ENCODE measurements at regions of chr4 and their contacts with region 1.

Region 1: DNA sequence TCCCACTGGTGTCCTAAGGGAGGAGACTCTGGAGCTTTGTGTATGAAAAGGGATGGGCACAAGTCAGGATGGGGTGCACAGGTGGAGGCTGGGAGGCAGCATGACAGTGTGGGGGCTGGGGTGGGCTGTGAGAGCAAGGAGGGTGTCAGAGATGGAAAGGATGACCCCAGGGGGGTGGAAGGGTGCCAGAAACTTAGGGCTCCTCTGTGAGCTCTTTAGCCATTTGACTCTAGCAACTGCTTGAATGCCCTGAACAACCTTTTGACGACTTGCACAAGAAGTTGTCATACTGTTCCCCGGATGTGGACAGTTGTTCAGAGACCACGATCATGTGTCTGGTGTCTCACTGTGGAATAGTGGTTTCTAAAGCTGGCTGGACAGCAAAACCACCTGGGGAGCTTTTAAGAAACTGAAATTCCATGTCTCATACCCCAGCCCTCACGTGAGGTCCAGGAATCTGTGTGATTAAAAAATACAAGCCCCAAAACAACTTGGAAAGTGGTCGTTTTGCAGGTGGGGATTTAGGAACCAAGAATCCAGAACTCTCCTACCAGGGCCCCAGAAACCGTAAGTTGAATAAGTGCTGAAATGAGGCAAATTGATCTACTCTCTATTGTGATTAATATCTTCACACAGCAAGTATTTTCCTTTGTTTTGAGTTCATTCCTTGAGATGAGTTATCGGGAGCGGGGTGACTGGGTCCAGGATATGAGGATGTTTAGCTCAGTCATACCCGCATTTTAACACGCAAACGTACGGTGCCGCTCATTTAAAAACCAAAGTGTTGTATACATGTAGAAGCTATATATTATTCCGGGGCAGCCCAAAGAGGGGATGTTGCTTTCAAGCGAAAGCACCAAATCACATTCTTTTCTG is 3.4 kb downstream of the RHOH start:
- DNase-seq: no peak
- ATAC-seq: peak; percentile 20
- H3K4me3 Mint-ChIP-seq: peak overlapping the region; percentile 97
- H3K27ac Mint-ChIP-seq: peak overlapping the region; percentile 95
- H3K4me1 Mint-ChIP-seq: peaks cover 67% of the 10 kb centered on the region
- H3K27me3 Mint-ChIP-seq: no peaks in the 10 kb centered on the region
- CTCF ChIP-seq: no peak

Region 2: GRCh38 chr4:38663801-38664705 is 1536.2 kb before region 1 on chr4 and contains the start of gene KLF3:
- CTCF ChIA-PET with region 1: no interaction called
- POLR2A ChIA-PET with region 1: no interaction called
- intact Hi-C with region 1: loop called (anchors 5 kb)
- DNase-seq: no peak
- ATAC-seq: peak; percentile 82
- H3K4me3 Mint-ChIP-seq: peak within 1 kb of the TSS; percentile 84
- H3K27ac Mint-ChIP-seq: peak within 1 kb of the TSS; percentile 88
- H3K4me1 Mint-ChIP-seq: peaks cover 67% of the 10 kb centered on the region
- H3K27me3 Mint-ChIP-seq: no peaks in the 10 kb centered on the region
- CTCF ChIP-seq: no peak
- total RNA-seq, gene KLF3: 14.5 and 15.9 TPM in 2 replicates

Region 3: DNA sequence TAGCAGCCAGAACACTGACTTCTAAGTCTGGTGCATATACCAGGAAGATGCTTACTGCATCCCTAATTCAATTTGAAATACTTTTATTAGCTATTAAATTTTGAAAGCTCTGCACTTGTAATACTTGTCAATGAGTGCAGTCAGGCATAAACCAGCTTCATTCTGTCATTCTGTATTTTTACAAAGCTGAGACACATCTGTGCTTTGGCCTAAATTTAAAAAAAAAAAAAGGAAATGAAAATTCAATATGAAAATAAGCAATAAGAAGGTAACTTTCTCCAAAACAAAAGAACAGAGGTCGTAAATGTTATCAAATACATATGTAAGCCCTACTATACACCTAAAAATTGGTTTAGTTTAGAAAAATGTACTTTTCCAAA is 568.5 kb before region 1 on chr4:
- CTCF ChIA-PET with region 1: no interaction called
- POLR2A ChIA-PET with region 1: interaction called, 11 read pairs
- intact Hi-C with region 1: loop called (anchors 5 kb)
- DNase-seq: no peak
- ATAC-seq: peak; percentile 70
- H3K4me3 Mint-ChIP-seq: peak overlapping the region; percentile 44
- H3K27ac Mint-ChIP-seq: peak overlapping the region; percentile 96
- H3K4me1 Mint-ChIP-seq: peaks cover 86% of the 10 kb centered on the region
- H3K27me3 Mint-ChIP-seq: no peaks in the 10 kb centered on the region
- CTCF ChIP-seq: no peak

Region 4: DNA sequence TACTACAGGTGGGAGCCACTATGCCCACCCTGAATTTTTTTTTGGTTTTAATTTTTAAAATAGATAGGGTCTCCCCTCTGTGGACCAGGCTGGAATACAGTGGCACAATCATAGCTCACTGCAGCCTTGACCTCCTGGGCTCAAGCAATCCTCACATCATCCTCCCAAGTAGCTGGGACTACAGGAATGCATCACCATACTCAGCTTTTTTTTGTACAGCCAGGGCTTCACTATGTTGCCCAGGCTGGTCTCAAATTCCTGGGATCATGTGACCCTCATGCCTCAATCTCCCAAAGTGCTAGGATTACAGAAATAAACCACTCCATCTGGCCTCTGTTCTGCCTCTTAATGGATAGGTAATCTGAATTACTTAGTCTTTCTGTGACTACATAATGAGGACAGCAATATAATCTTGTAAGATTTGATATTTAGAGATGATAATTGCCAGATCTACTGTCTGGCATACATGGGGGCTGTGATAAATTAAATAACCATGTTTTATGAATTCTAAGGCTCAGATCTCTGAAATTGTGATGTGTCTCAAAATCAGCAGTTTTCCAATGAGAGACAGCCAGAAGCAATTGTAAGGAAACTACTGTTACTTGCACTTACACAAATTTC is 249.3 kb before region 1 on chr4:
- CTCF ChIA-PET with region 1: no interaction called
- POLR2A ChIA-PET with region 1: no interaction called
- intact Hi-C with region 1: no loop called
- DNase-seq: no peak
- ATAC-seq: no peak
- H3K4me3 Mint-ChIP-seq: no peak overlapping the region
- H3K27ac Mint-ChIP-seq: peak overlapping the region; percentile 50
- H3K4me1 Mint-ChIP-seq: peaks cover 46% of the 10 kb centered on the region
- H3K27me3 Mint-ChIP-seq: no peaks in the 10 kb centered on the region
- CTCF ChIP-seq: no peak

Region 5: DNA sequence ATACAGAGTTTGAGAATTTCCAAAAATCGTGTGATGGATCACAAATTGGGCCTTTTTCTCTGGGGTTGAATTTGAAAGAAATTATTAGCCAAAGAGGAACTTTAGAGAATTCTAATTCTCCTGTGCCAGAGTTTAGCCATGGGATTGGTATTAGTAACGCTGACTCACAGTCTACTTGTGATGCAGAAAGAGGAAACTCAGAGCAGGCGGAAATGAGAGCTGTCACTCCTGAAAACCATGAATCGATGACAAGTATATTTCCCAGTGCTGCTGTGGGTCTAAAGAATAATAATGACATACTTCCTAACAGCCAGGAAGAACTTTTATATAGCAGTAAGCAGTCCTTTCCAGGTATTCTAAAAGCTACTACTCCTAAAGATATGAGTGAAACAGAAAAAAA is 78.7 kb before region 1 on chr4:
- CTCF ChIA-PET with region 1: no interaction called
- POLR2A ChIA-PET with region 1: no interaction called
- intact Hi-C with region 1: no loop called
- DNase-seq: no peak
- ATAC-seq: peak; percentile 47
- H3K4me3 Mint-ChIP-seq: no peak overlapping the region
- H3K27ac Mint-ChIP-seq: no peak overlapping the region
- H3K4me1 Mint-ChIP-seq: peaks cover 6% of the 10 kb centered on the region
- H3K27me3 Mint-ChIP-seq: no peaks in the 10 kb centered on the region
- CTCF ChIP-seq: no peak

Region 6: DNA sequence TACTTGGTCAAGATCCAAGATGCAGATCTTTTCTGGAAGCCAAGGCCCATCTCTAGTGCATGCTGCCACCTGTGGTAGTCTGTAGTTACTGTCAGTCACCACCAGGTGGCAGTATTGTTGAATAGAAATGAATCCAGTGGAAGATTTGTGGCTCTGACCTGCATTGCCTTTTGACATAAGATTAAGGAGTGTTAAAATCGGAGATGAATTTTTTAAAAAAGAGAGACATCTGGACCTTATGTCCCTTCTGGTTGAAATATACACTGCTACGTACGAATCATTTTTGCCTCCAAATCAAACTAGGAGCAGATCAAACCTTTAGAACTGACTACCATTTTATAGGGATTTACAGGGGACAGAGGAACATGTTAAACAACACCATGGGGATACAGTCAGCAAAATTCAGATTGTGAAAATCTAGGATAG is 50.3 kb before region 1 on chr4:
- CTCF ChIA-PET with region 1: interaction called, 16 read pairs
- POLR2A ChIA-PET with region 1: interaction called, 37 read pairs
- intact Hi-C with region 1: loop called (anchors 1 kb)
- DNase-seq: no peak
- ATAC-seq: peak; percentile 97
- H3K4me3 Mint-ChIP-seq: no peak overlapping the region
- H3K27ac Mint-ChIP-seq: peak overlapping the region; percentile 59
- H3K4me1 Mint-ChIP-seq: peaks cover 38% of the 10 kb centered on the region
- H3K27me3 Mint-ChIP-seq: no peaks in the 10 kb centered on the region
- CTCF ChIP-seq: peak; percentile 57

Region 7: GRCh38 chr4:40212674-40213527 is 12.7 kb after region 1 on chr4:
- CTCF ChIA-PET with region 1: no interaction called
- POLR2A ChIA-PET with region 1: interaction called, 29 read pairs
- intact Hi-C with region 1: loop called (anchors 1 kb)
- DNase-seq: no peak
- ATAC-seq: no peak
- H3K4me3 Mint-ChIP-seq: peak overlapping the region; percentile 42
- H3K27ac Mint-ChIP-seq: peak overlapping the region; percentile 80
- H3K4me1 Mint-ChIP-seq: peaks cover 96% of the 10 kb centered on the region
- H3K27me3 Mint-ChIP-seq: no peaks in the 10 kb centered on the region
- CTCF ChIP-seq: no peak

Region 8: DNA sequence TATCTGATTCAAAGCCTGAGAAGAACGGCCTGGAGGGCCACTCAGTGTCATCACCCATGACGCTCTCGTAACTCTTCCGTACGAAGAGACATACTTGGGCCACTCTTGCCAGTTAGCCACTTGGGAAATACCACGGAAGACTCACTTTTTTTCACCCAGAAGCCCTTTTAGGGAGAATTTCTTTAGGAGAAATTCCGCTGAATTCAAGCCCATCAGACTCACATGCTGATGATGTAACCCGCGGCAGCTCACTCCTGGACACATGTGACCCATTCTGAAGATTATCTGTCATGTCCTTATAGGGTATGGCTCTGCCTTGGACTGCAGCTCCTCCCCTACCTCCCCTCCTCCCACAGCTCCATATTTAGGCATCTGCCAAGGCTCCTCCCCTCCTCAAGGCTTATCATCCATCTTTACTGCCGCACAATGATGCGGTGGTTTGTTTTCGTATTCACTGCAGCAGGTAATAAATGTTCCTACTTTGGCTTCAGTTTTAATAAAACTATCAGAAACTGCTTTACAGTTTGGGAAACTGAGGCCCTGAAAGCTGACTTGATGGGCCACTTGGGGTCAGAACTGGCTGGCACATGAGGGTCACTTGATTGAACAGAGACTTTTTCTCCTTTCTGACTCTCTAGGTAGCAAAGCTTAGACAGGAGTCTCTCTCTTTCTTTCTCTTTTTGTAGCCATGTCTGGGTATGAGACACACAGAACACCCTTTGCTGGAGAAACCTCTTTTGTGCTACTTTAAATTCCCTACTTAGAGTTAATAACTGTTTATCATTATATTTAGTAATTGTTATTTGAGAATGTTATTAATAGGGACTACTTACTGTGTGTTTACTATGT is 38.7 kb after region 1 on chr4:
- CTCF ChIA-PET with region 1: no interaction called
- POLR2A ChIA-PET with region 1: interaction called, 10 read pairs
- intact Hi-C with region 1: no loop called
- DNase-seq: no peak
- ATAC-seq: no peak
- H3K4me3 Mint-ChIP-seq: peak overlapping the region; percentile 16
- H3K27ac Mint-ChIP-seq: peak overlapping the region; percentile 77
- H3K4me1 Mint-ChIP-seq: peaks cover 91% of the 10 kb centered on the region
- H3K27me3 Mint-ChIP-seq: no peaks in the 10 kb centered on the region
- CTCF ChIP-seq: no peak

Region 9: GRCh38 chr4:40264995-40265909 is 65.0 kb after region 1 on chr4:
- CTCF ChIA-PET with region 1: no interaction called
- POLR2A ChIA-PET with region 1: no interaction called
- intact Hi-C with region 1: no loop called
- DNase-seq: no peak
- ATAC-seq: peak; percentile 52
- H3K4me3 Mint-ChIP-seq: peak overlapping the region; percentile 50
- H3K27ac Mint-ChIP-seq: peak overlapping the region; percentile 66
- H3K4me1 Mint-ChIP-seq: peaks cover 36% of the 10 kb centered on the region
- H3K27me3 Mint-ChIP-seq: no peaks in the 10 kb centered on the region
- CTCF ChIP-seq: no peak

Region 10: GRCh38 chr4:40515398-40516293 is 315.4 kb after region 1 on chr4:
- CTCF ChIA-PET with region 1: no interaction called
- POLR2A ChIA-PET with region 1: no interaction called
- intact Hi-C with region 1: loop called (anchors 10 kb)
- DNase-seq: no peak
- ATAC-seq: peak; percentile 79
- H3K4me3 Mint-ChIP-seq: peak overlapping the region; percentile 67
- H3K27ac Mint-ChIP-seq: peak overlapping the region; percentile 48
- H3K4me1 Mint-ChIP-seq: peaks cover 44% of the 10 kb centered on the region
- H3K27me3 Mint-ChIP-seq: no peaks in the 10 kb centered on the region
- CTCF ChIP-seq: no peak

Region 11: GRCh38 chr4:41814565-41814964 is 1614.3 kb after region 1 on chr4:
- CTCF ChIA-PET with region 1: no interaction called
- POLR2A ChIA-PET with region 1: no interaction called
- intact Hi-C with region 1: no loop called
- DNase-seq: no peak
- ATAC-seq: no peak
- H3K4me3 Mint-ChIP-seq: no peak overlapping the region
- H3K27ac Mint-ChIP-seq: no peak overlapping the region
- H3K4me1 Mint-ChIP-seq: no peaks in the 10 kb centered on the region
- H3K27me3 Mint-ChIP-seq: peaks cover 8% of the 10 kb centered on the region
- CTCF ChIP-seq: no peak

Measured in activated B cell treated with CpG ODN at 0.5 μM for 24 hours (primary cell).